Esophagus squamous epithelium (tissue), 5 donors: ENCODE measurements at regions of chr12 and their contacts with region 1.

Region 1: GRCh38 chr12:19643635-19644034 is 204.3 kb downstream of the AEBP2 start:
- DNase-seq: no peak
- H3K4me3 ChIP-seq: no peak overlapping the region
- H3K27ac ChIP-seq: no peak overlapping the region
- H3K4me1 ChIP-seq: peaks cover 0 to 8% (median 0%) of the 10 kb centered on the region in 3 donors
- H3K27me3 ChIP-seq: no peaks in the 10 kb centered on the region
- CTCF ChIP-seq: peak in 5 of 6 experiments; percentile 34 to 70 (median 50)
- POLR2A ChIP-seq: no peak

Region 2: DNA sequence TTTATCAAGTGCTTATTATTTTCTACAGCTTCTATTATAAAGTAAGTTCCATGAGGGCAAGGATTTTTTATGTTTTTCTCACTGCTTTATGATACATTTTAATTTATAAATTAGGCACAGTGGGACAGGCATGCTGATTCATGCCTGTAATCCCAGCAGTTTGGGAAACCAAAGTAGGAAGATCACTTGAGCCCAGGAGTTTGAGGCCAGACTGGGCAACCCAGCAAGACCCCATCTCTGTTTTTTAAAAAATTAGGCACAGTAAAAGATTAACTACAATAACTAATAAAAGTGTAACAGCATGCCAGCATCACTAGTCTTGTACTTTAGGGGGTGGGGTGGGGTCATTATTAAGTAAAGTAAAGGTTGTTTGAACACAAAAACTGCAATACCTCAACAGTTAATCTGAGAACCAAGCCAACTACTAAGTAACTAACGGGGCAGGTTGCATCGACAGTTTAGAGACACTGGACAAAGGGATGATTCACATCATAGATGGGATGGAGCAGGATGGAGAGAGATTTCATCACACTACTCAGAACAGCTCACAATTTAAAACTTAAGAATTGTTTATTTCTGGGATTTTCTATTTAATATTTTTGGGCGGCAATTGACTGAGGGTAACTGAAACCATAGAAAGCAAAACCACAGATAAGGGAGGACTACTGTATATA is 394.6 kb before region 1 on chr12:
- intact Hi-C with region 1: no loop called
- DNase-seq: no peak
- H3K4me3 ChIP-seq: no peak overlapping the region
- H3K27ac ChIP-seq: no peak overlapping the region
- H3K4me1 ChIP-seq: peaks cover 0 to 6% (median 0%) of the 10 kb centered on the region in 3 donors
- H3K27me3 ChIP-seq: no peaks in the 10 kb centered on the region
- CTCF ChIP-seq: no peak
- POLR2A ChIP-seq: no peak

Region 3: GRCh38 chr12:19302100-19302640 is 341.5 kb before region 1 on chr12:
- intact Hi-C with region 1: no loop called
- DNase-seq: no peak
- H3K4me3 ChIP-seq: no peak overlapping the region
- H3K27ac ChIP-seq: no peak overlapping the region
- H3K4me1 ChIP-seq: peaks cover 0 to 27% (median 8%) of the 10 kb centered on the region in 3 donors
- H3K27me3 ChIP-seq: no peaks in the 10 kb centered on the region
- CTCF ChIP-seq: no peak
- POLR2A ChIP-seq: no peak

Region 4: GRCh38 chr12:19507823-19508222 is 135.8 kb before region 1 on chr12:
- intact Hi-C with region 1: loop called (anchors 10 kb)
- DNase-seq: no peak
- H3K4me3 ChIP-seq: no peak overlapping the region
- H3K27ac ChIP-seq: no peak overlapping the region
- H3K4me1 ChIP-seq: peaks cover 7 to 50% (median 21%) of the 10 kb centered on the region in 3 donors
- H3K27me3 ChIP-seq: no peaks in the 10 kb centered on the region
- CTCF ChIP-seq: peak in 2 of 6 experiments; percentile 12 to 29
- POLR2A ChIP-seq: no peak

Region 5: DNA sequence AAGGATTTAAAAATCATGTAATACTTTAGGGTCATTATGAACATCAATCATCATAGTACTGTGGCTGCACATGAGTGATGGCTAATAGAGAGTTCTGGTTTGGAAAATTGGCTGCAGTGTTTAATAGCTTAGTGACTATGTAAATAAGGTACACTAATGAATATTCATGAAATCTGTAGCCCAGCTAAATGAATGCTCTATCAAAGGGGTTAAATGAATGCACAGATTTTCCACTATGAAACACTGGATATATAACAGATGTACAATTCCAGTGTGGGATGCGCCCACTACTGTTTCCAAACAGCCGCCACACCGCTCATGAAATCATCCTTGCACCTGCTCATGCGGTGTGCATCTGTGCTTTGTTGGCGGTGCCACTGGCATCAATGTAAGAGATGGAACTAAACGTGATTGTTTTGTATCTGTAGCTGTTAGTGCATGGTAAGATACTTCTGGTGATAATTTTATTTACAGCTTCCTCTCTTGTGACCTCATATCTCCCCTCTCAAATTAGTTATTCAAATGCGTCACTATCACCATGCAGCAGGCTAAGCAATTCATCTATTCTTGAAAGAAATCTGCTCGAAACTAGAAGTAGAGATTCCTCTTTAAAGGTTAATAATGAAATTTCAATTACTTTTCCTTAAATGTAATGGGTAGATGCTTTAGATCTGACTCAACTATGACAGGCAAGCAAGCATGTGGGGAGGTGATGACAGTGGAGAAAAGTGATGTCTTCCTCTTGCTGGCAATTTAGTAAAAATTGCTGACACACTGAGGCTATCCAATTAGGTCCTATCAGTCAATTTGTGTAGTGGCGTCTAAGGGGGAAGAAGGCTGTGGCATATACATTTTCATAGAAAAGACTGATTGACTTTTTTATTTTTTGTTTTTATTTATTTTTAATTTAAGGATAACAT is 229.2 kb after region 1 on chr12:
- intact Hi-C with region 1: no loop called
- DNase-seq: no peak
- H3K4me3 ChIP-seq: no peak overlapping the region
- H3K27ac ChIP-seq: no peak overlapping the region
- H3K4me1 ChIP-seq: peaks cover 0 to 31% (median 0%) of the 10 kb centered on the region in 3 donors
- H3K27me3 ChIP-seq: no peaks in the 10 kb centered on the region
- CTCF ChIP-seq: no peak
- POLR2A ChIP-seq: no peak